CD4-positive, alpha-beta memory T cell (primary cell): ENCODE measurements at regions of chr1 and their contacts with region 1.

Region 1: GRCh38 chr1:214328770-214329469 is 48.0 kb downstream of the SMYD2 start:
- DNase-seq: peak; percentile 73 to 78 (median 74)
- H3K4me3 ChIP-seq: no peak overlapping the region
- H3K4me3 Mint-ChIP-seq: no peak overlapping the region
- H3K27ac ChIP-seq: no peak overlapping the region
- H3K27ac Mint-ChIP-seq: peak overlapping the region in 3 of 7 donors; percentile 36 to 64 (median 47)
- H3K4me1 ChIP-seq: no peaks in the 10 kb centered on the region
- H3K4me1 Mint-ChIP-seq: peaks cover 0 to 2% (median 0%) of the 10 kb centered on the region in 4 donors
- H3K27me3 ChIP-seq: no peaks in the 10 kb centered on the region
- H3K27me3 Mint-ChIP-seq: no peaks in the 10 kb centered on the region

Region 2: GRCh38 chr1:213122514-213122929 is 1206.4 kb before region 1 on chr1:
- CTCF ChIA-PET with region 1: interaction called, 3 read pairs
- POLR2A ChIA-PET with region 1: no interaction called
- intact Hi-C with region 1: loop called (anchors 2 kb)
- DNase-seq: peak in 4 of 5 donors; percentile 11 to 16 (median 12)
- H3K4me3 ChIP-seq: no peak overlapping the region
- H3K4me3 Mint-ChIP-seq: no peak overlapping the region
- H3K27ac ChIP-seq: no peak overlapping the region
- H3K27ac Mint-ChIP-seq: no peak overlapping the region
- H3K4me1 ChIP-seq: no peaks in the 10 kb centered on the region
- H3K4me1 Mint-ChIP-seq: peaks cover 0 to 2% (median 0%) of the 10 kb centered on the region in 4 donors
- H3K27me3 ChIP-seq: no peaks in the 10 kb centered on the region
- H3K27me3 Mint-ChIP-seq: no peaks in the 10 kb centered on the region

Region 3: DNA sequence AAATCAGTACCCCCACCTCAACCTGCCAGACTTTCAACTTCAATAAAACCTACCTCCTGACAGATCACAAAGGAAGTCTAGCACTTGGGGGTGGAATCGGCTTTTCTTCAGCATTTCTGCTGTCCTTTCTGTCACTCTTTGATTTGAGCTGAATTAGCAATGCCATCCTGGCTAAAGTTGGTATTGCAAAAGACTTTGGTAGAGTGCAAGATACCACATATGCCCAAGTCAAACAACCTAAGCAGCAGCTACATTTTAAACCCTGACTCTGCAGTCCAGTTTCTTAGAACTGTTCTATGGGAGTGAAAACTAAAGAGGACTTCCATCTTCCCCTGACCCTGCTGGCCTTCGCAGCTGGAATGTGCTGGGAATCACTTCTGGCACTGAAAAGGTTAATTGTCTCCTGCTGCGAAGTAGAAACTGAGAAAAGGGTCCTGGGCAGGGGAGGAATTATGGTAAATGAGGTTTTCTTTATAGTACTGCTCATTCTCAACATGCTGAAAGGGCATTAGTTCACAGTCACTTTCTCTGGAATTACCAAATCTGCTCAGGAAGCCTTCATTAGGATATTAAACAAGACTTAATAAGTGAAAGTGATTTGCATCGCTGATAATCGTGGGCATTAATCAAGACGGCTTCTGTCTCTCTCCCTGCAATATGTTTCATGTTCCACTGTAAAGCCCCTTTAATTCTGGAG is 174.2 kb before region 1 on chr1:
- CTCF ChIA-PET with region 1: no interaction called
- POLR2A ChIA-PET with region 1: no interaction called
- intact Hi-C with region 1: no loop called
- DNase-seq: no peak
- H3K4me3 ChIP-seq: no peak overlapping the region
- H3K4me3 Mint-ChIP-seq: no peak overlapping the region
- H3K27ac ChIP-seq: no peak overlapping the region
- H3K27ac Mint-ChIP-seq: no peak overlapping the region
- H3K4me1 ChIP-seq: no peaks in the 10 kb centered on the region
- H3K4me1 Mint-ChIP-seq: no peaks in the 10 kb centered on the region
- H3K27me3 ChIP-seq: no peaks in the 10 kb centered on the region
- H3K27me3 Mint-ChIP-seq: peaks cover 5 to 8% of the 10 kb centered on the region in 2 donors

Region 4: GRCh38 chr1:214213136-214213535 is 115.8 kb before region 1 on chr1:
- CTCF ChIA-PET with region 1: interaction called, 133 read pairs
- POLR2A ChIA-PET with region 1: interaction called, 7 read pairs
- intact Hi-C with region 1: loop called (anchors 1 kb)
- DNase-seq: no peak
- H3K4me3 ChIP-seq: no peak overlapping the region
- H3K4me3 Mint-ChIP-seq: no peak overlapping the region
- H3K27ac ChIP-seq: no peak overlapping the region
- H3K27ac Mint-ChIP-seq: no peak overlapping the region
- H3K4me1 ChIP-seq: no peaks in the 10 kb centered on the region
- H3K4me1 Mint-ChIP-seq: peaks cover 0 to 5% (median 3%) of the 10 kb centered on the region in 4 donors
- H3K27me3 ChIP-seq: no peaks in the 10 kb centered on the region
- H3K27me3 Mint-ChIP-seq: peaks cover 13 to 16% of the 10 kb centered on the region in 2 donors

Region 5: GRCh38 chr1:214281021-214281719 is 47.8 kb before region 1 on chr1 and contains the start of gene SMYD2:
- CTCF ChIA-PET with region 1: interaction called, 18 read pairs
- POLR2A ChIA-PET with region 1: no interaction called
- intact Hi-C with region 1: no loop called
- DNase-seq: peak; percentile 67 to 77 (median 72)
- H3K4me3 ChIP-seq: peak within 1 kb of the TSS; percentile 79
- H3K4me3 Mint-ChIP-seq: peak within 1 kb of the TSS; percentile 89 to 96 (median 92)
- H3K27ac ChIP-seq: peak within 1 kb of the TSS; percentile 68
- H3K27ac Mint-ChIP-seq: peak within 1 kb of the TSS; percentile 69 to 97 (median 93)
- H3K4me1 ChIP-seq: peaks cover 40% of the 10 kb centered on the region
- H3K4me1 Mint-ChIP-seq: peaks cover 34 to 56% (median 45%) of the 10 kb centered on the region in 4 donors
- H3K27me3 ChIP-seq: no peaks in the 10 kb centered on the region
- H3K27me3 Mint-ChIP-seq: no peaks in the 10 kb centered on the region
- total RNA-seq, gene SMYD2: 41.4 to 41.9 TPM

Region 6: GRCh38 chr1:214303141-214303930 is 25.6 kb before region 1 on chr1:
- CTCF ChIA-PET with region 1: interaction called, 28 read pairs
- POLR2A ChIA-PET with region 1: no interaction called
- intact Hi-C with region 1: no loop called
- DNase-seq: no peak
- H3K4me3 ChIP-seq: no peak overlapping the region
- H3K4me3 Mint-ChIP-seq: no peak overlapping the region
- H3K27ac ChIP-seq: no peak overlapping the region
- H3K27ac Mint-ChIP-seq: peak overlapping the region in 1 of 7 donors; percentile 58
- H3K4me1 ChIP-seq: peaks cover 13% of the 10 kb centered on the region
- H3K4me1 Mint-ChIP-seq: peaks cover 19 to 38% (median 21%) of the 10 kb centered on the region in 4 donors
- H3K27me3 ChIP-seq: no peaks in the 10 kb centered on the region
- H3K27me3 Mint-ChIP-seq: no peaks in the 10 kb centered on the region

Region 7: GRCh38 chr1:214584805-214585766 is 256.2 kb after region 1 on chr1:
- CTCF ChIA-PET with region 1: interaction called, 27 read pairs
- POLR2A ChIA-PET with region 1: no interaction called
- intact Hi-C with region 1: no loop called
- DNase-seq: no peak
- H3K4me3 ChIP-seq: no peak overlapping the region
- H3K4me3 Mint-ChIP-seq: no peak overlapping the region
- H3K27ac ChIP-seq: no peak overlapping the region
- H3K27ac Mint-ChIP-seq: no peak overlapping the region
- H3K4me1 ChIP-seq: no peaks in the 10 kb centered on the region
- H3K4me1 Mint-ChIP-seq: no peaks in the 10 kb centered on the region
- H3K27me3 ChIP-seq: no peaks in the 10 kb centered on the region
- H3K27me3 Mint-ChIP-seq: peaks cover 5 to 8% of the 10 kb centered on the region in 2 donors

Region 8: DNA sequence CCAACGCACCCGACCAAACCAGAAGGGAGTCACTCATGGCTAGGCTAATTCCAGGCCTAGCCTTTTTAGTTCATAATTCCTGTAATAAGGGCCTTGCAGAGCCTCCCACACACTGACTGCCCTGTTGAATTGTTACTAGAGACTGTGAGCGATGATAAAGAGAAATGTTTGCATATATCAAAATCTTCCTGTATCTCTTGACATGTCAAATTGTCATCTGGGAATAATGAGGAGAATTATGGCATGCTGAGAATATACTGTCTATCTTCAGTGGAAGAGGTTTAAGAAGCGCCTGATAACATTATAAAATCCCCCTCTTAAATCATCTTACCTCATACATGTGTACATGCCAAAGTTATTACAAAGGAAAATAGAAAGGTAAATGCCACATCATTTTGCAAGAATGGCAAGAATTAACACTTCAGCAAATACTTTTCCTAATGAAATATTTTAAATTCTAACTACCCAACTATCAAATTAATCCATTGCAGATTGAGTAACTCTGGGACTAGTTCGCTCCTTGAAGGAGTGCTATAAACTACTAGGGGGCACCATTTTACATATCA is 418.2 kb after region 1 on chr1:
- CTCF ChIA-PET with region 1: no interaction called
- POLR2A ChIA-PET with region 1: no interaction called
- intact Hi-C with region 1: no loop called
- DNase-seq: no peak
- H3K4me3 ChIP-seq: no peak overlapping the region
- H3K4me3 Mint-ChIP-seq: no peak overlapping the region
- H3K27ac ChIP-seq: no peak overlapping the region
- H3K27ac Mint-ChIP-seq: no peak overlapping the region
- H3K4me1 ChIP-seq: no peaks in the 10 kb centered on the region
- H3K4me1 Mint-ChIP-seq: no peaks in the 10 kb centered on the region
- H3K27me3 ChIP-seq: no peaks in the 10 kb centered on the region
- H3K27me3 Mint-ChIP-seq: no peaks in the 10 kb centered on the region

Region 9: DNA sequence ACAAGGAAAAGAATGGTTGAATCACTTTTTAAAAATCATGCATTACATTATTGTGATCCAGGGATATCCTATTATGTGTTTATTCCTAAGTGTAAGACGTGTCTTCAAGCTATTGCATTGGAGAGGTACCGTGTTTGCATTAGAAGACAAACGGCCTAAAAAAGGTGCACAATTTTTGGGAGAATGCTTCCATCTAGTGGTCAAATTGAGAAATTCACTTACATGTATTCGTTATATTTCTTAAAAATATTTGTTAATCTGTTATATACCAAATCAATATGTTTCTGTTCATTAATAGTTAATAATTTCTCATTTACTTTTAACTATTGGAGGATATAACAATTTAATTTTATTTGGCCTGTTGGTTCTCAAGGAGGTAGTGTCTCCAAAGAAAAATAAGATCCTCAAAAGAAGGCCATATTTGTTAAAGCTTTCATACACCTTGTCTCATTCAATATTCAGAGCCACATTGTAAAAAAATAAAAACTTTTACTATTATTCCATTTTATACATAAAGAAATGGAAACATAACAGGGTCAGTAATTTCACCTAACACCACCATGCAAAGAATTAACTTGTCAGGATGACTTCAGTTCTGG is 1197.7 kb after region 1 on chr1:
- CTCF ChIA-PET with region 1: interaction called, 12 read pairs
- POLR2A ChIA-PET with region 1: no interaction called
- intact Hi-C with region 1: loop called (anchors 1 kb)
- DNase-seq: peak in 4 of 5 donors; percentile 23 to 33 (median 32)
- H3K4me3 ChIP-seq: no peak overlapping the region
- H3K4me3 Mint-ChIP-seq: no peak overlapping the region
- H3K27ac ChIP-seq: no peak overlapping the region
- H3K27ac Mint-ChIP-seq: no peak overlapping the region
- H3K4me1 ChIP-seq: no peaks in the 10 kb centered on the region
- H3K4me1 Mint-ChIP-seq: peaks cover 0 to 1% (median 0%) of the 10 kb centered on the region in 4 donors
- H3K27me3 ChIP-seq: no peaks in the 10 kb centered on the region
- H3K27me3 Mint-ChIP-seq: peaks cover 0 to 1% of the 10 kb centered on the region in 2 donors